Dorsolateral prefrontal cortex (tissue), 120 donors: ENCODE measurements at regions of chr12 and their contacts with region 1.

Region 1: DNA sequence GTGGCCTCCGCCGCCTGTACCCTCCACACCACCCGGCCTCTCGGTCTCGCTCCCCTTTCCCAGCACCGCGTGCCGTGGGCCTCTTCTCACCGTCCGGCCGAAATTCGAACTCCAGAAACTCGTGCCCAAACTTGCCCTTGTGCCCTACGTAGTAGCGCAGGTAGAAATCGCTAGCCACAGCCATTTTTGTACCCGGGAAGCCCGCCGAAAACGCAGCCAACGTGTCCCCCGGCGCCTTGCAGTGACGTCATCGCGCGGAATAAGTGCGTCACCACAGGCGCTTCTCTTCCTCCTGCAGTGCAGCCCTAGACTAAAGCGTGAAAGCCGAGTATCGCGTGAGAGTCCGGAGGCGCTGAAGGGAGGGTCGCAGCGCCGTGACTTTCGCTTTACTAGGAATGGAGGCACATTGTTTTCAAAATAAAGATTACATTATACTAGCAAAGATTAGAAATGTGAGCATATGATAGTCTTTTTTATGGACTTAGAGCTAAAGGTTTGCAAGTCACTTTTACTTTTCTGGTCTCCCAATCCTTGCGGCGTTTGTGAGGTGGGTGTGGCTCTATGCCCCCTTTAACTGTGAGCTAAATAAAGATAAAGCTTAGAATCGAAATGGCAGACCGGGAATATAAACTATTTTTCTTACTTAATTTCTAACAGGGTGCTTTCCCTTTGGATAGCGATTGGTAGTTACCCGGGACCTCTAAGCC is at the start of gene MAGOHB:
- DNase-seq: peak; percentile 86 to 94 (median 92)
- H3K4me3 ChIP-seq: peak within 1 kb of the TSS; percentile 49 to 99 (median 87)
- H3K27ac ChIP-seq: peak within 1 kb of the TSS in 57 of 59 donors; percentile 4 to 95 (median 80)
- H3K27me3 ChIP-seq: no peaks in the 10 kb centered on the region
- CTCF ChIP-seq: peak in 40 of 56 donors; percentile 5 to 59 (median 30)
- total RNA-seq, gene MAGOHB: 9.5 to 25.6 (median 15.0) TPM

Region 2: GRCh38 chr12:10590966-10591365 is 22.5 kb before region 1 on chr12:
- intact Hi-C with region 1: no loop called
- DNase-seq: no peak
- H3K4me3 ChIP-seq: no peak overlapping the region
- H3K27ac ChIP-seq: no peak overlapping the region
- H3K27me3 ChIP-seq: no peaks in the 10 kb centered on the region
- CTCF ChIP-seq: no peak

Region 3: DNA sequence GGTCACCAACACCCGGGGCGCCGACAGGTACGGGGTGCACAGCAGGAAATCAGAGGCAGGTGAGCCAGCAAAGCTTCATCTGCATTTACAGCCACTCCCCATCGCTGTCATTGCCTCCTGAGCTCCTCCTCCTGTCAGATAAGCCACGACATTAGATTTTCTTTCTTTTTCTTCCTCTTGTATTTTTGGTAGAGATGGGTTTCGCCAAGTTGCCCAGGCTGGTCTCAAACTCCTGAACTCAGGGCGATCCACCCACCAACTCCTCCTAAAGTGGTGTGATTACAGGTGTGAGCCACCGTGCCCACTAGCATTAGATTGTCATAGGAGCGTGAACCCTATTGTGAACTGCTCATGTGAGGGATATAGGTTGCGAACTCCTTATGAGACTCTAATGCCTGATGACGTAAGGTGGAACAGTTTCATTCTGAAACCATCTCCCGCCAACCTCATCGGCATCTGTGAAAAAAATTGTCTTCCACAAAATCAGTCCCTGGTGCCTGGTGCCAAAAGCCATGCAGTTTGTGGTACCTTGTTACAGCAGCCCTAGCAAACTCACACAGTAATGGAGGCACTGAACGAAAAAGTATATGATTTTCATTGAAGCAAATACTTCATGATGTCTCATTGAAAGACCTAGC is 58.8 kb after region 1 on chr12:
- intact Hi-C with region 1: no loop called
- DNase-seq: no peak
- H3K4me3 ChIP-seq: peak overlapping the region in 35 of 59 donors; percentile 10 to 73 (median 61)
- H3K27ac ChIP-seq: no peak overlapping the region
- H3K27me3 ChIP-seq: peaks cover 0 to 35% (median 3%) of the 10 kb centered on the region in 45 donors
- CTCF ChIP-seq: no peak

Region 4: DNA sequence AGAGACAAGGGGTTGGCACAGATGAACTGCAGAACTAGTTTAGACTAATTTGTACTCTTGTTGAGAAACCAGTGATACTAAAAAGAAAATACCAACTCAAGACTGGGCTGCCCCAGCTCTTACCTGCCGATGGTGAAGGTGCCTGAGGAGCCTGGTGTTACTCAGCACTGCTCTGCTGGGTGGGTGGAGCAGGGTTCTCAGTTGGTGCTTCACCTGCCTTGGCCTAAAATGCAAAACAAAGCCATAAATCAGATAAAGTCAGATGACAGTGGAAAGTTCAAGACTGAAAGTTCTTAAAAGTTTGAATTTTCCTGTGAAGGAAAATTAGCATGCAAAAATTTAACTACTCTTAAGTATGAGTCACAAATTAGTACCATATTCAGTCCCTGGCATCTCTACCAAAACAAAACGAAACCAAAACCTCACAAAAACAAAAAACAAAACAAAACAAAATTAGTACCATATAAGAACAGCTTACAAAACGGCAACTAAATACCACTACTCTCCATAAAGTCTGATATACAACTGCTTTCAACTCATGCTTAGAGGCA is 87.7 kb after region 1 on chr12:
- intact Hi-C with region 1: no loop called
- DNase-seq: no peak
- H3K4me3 ChIP-seq: no peak overlapping the region
- H3K27ac ChIP-seq: no peak overlapping the region
- H3K27me3 ChIP-seq: no peaks in the 10 kb centered on the region
- CTCF ChIP-seq: no peak

Region 5: DNA sequence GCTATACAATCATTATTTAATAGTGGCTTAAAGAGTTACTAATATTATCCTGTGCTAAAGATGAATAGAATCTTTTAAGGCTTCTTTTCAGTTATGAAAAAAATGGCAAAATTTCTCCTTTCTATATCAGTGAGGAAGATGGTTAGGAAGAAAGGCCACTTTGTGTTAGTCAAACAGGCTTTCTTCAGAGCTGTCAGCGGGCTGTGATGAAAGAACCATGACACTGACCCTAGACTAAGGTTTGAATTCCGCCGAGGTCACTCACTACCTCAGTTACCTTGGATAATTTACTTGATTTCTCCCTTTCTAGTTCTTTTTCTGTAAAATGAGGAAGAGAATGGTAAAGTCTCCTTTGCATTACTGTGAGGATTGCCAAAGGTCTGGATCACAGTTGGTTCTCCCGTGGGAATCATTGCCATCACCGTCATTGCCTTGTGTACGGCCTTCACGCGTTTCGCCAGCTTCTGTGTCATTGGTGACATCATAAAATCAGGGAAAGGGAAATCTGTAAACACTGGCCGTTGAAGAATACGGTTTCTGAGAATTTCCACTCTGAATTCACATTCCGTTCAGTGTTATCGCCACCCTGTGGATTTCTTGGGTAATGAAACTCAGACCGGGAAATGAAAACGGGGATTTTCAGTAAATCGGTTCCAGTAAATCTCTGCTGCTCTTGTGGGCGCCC is 136.3 kb after region 1 on chr12:
- intact Hi-C with region 1: loop called in 1 of 2 experiments (anchors 10 kb)
- DNase-seq: peak; percentile 29 to 85 (median 61)
- H3K4me3 ChIP-seq: peak overlapping the region; percentile 16 to 69 (median 49)
- H3K27ac ChIP-seq: peak overlapping the region in 39 of 59 donors; percentile 2 to 84 (median 58)
- H3K27me3 ChIP-seq: peaks cover 0 to 5% (median 0%) of the 10 kb centered on the region in 45 donors
- CTCF ChIP-seq: peak; percentile 91 to 99 (median 98)